ENCODE measurements at regions of chr10 and their contacts with region 1.

Region 1: GRCh38 chr10:70293169-70293813 is 9.5 kb upstream of the NPFFR1 start:
- DNase-seq: no peak
- ATAC-seq: no peak
- H3K4me3 ChIP-seq: no peak overlapping the region
- H3K27ac ChIP-seq: no peak overlapping the region
- H3K4me1 ChIP-seq: 0 out of 2 replicates have a peak, but pooled peaks cover 9% of the 10 kb centered on the region
- H3K27me3 ChIP-seq: no peaks in the 10 kb centered on the region
- CTCF ChIP-seq: no peak

Region 2: DNA sequence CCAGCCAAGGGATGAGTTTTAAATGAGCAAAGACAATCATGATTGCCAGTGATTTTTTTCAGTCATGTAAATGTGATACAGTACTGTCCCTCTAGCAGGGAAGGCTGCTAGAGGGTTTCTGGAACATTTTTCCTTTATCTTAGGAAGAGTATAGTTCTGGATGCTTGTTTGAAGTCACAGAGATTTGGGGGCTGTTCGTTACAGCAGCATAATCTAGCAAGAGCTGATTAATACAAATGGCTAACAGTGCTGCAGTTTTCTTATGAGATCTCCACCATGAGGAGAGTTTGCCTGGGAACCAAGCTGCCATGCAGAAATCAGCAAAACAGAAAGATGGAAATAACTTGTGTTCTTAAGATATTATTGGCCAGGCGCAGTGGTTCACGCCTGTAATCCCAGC is 52.2 kb before region 1 on chr10:
- CTCF ChIA-PET with region 1: no interaction called
- POLR2A ChIA-PET with region 1: interaction called, 10 read pairs
- in situ Hi-C with region 1: no loop called
- intact Hi-C with region 1: no loop called
- DNase-seq: no peak
- ATAC-seq: no peak
- H3K4me3 ChIP-seq: no peak overlapping the region
- H3K27ac ChIP-seq: no peak overlapping the region
- H3K4me1 ChIP-seq: no peaks in the 10 kb centered on the region
- H3K27me3 ChIP-seq: peaks cover 7% of the 10 kb centered on the region
- CTCF ChIP-seq: no peak

Measured in Panc1 (cell line).